Cardiac septum (tissue), 1 donor: ENCODE measurements at regions of chr19 and their contacts with region 1.

Region 1: DNA sequence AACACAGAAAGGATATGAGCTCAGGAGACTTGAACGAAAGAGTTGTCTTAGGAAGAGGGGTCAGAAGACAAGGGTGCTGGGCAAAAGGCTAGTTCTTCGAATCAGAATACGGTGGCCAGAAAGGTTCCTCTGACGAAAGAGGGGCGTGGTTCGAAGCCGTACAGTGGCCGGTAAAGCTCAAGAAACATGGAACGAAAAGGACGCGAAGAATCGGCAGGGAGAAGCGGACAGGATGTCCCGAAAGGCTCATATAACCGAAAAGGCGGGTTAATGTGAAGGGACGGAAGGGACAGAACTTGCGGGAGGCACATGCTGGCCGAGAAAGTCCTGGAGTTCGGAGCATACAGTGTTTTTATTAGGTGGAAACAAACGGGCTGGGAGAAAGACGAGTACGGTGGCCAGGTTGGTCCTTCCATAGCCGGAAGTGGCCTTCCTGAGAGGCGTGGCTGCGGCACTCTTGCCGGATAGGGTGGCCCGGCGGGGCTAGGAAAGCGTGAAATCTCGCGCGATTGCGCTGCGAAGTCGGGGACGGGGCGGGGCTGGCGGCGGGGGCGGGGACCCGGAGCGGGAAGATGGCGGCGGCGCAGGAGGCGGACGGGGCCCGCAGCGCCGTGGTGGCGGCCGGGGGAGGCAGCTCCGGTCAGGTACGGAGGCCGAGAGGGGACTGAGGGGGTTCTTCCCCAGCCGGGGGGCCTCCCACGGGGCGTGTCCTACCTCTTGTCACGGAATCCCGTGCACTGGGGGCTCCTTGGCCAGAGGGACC is at the start of gene CLPTM1:
- DNase-seq: peak; percentile 98
- total RNA-seq, gene CLPTM1: 87.4 TPM

Region 2: DNA sequence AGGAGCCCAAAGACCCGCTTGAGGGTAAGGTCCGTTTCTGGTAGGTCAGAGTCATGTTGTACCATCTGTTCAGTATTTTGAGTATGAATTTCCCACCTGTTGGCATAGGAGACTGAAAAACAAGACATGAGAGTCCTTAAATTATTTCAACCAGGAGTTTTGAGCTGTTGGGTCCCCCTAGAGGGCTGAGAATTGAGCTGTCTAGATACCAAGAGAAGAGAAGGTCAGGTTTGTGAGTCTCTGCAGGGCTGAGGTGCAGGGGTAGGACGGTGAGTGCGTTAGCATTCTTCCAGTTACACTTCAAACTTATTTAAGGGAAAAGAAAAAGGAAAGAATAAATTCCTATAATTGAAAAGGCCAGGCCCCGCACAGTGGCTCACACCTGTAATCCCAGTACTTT is 172.3 kb before region 1 on chr19:
- intact Hi-C with region 1: loop called (anchors 10 kb)
- DNase-seq: no peak

Region 3: DNA sequence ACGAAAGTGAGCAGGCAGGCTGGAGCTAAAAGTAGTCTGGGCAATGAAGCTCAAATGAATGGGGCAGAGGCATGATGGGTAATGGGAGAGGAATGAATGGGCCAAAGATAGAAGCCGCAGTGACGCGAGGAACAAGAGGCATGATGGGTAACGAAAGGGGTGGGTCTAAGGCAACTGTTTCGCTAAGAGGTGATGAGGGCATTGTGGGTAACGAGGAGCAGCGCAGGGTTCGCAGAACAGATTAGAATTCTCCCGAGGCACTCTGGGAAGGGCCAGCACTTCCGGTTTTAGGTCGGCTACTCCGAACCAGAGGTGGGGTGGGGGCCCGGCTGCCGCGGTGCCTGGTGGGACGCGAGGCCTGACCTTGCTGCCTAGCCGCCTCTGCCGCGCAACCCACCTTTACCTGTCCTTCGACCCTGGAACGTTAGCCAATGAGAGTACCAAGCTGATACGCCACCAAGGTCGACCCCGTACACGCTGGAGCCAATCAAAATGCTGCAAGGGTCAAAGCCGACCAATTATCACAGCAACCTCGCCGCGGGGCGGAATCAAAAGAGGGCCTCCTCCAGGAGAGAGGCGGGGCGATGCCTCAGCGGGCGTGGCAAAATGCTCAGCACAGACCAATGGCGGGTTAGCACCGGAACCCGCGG is 64.5 kb before region 1 on chr19:
- intact Hi-C with region 1: loop called (anchors 1 kb)
- DNase-seq: peak; percentile 100

Region 4: GRCh38 chr19:44903602-44904425 is 51.2 kb before region 1 on chr19:
- intact Hi-C with region 1: loop called (anchors 1 kb)
- DNase-seq: peak; percentile 88